GM18951 (cell line): ENCODE measurements at regions of chr6 and their contacts with region 1.

Region 1: DNA sequence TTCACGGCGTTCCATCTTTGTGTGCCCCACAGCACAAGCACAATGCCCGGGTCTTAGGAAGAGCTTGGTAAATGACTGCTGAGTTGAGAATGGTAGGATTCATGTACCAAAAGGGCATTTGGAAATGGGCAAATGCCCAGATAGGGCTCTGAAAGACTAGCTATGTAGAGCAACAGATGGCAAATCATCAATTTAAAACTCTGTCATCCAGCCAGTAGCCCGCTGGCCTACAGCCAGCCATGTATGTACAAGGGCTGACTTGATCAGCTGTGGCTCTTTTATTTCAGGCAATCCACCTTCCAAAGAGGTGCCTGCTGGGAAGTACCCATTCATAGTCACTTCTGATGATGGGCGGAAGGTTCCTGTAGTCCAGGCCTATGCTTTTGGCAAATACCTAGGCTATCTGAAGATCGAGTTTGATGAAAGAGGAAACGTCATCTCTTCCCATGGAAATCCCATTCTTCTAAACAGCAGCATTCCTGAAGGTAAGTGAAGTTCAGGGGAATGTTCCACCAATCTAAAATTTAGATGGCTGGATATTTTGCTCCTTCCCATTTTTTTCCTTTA is 35.1 kb downstream of the NT5E start:
- POLR2A ChIP-seq: no peak

Region 2: GRCh38 chr6:85354761-85355618 is 130.0 kb before region 1 on chr6:
- in situ Hi-C with region 1: loop called (anchors 5 kb)
- POLR2A ChIP-seq: no peak